ENCODE measurements at regions of chr6 and their contacts with region 1.

Region 1: DNA sequence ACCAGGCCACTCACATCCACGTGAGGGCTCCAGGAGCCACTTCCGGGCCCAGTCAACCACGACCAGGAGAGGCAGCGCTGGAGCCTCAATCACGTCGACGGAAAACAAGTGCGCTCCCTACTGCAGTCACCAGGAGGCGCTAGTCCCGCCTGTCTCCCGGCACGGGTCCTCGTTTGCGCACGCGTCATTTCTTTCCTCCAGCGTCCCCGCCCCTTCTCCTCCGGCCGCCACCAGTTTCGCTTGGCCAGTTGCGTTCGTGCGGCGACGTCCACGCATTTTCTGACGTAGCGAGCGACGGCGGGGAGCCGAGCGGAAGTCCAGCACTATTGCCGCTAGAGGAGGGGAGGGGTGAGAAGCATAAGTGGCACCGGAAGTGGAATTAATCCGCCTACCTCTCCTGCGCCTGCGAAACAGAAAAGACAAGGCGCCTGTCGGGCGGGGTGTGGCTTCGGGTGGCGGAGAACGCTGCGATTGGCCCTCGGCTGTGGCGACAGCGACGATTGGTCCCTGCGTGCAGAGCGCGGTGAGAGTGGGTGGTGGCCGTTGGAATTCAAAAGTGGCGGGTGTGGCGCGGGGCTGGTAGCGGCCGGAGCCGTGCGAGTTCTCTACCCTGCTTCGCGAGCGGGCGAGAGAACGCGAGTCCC is at the start of gene KIFC1:
- DNase-seq: peak; percentile 100
- ATAC-seq: peak; percentile 90
- H3K4me3 Mint-ChIP-seq: peak within 1 kb of the TSS; percentile 88
- H3K27ac Mint-ChIP-seq: peak within 1 kb of the TSS; percentile 96
- H3K4me1 Mint-ChIP-seq: peaks cover 37% of the 10 kb centered on the region
- H3K27me3 Mint-ChIP-seq: no peaks in the 10 kb centered on the region
- total RNA-seq, gene KIFC1: 86.0 to 89.3 TPM

Region 2: GRCh38 chr6:33248925-33249731 is 142.3 kb before region 1 on chr6:
- CTCF ChIA-PET with region 1: no interaction called
- POLR2A ChIA-PET with region 1: no interaction called
- intact Hi-C with region 1: loop called in 1 of 2 experiments (anchors 1 kb)
- DNase-seq: peak; percentile 99
- ATAC-seq: peak; percentile 93
- H3K4me3 Mint-ChIP-seq: peak overlapping the region; percentile 91
- H3K27ac Mint-ChIP-seq: peak overlapping the region; percentile 96
- H3K4me1 Mint-ChIP-seq: peaks cover 41% of the 10 kb centered on the region
- H3K27me3 Mint-ChIP-seq: peaks cover 3% of the 10 kb centered on the region

Region 3: DNA sequence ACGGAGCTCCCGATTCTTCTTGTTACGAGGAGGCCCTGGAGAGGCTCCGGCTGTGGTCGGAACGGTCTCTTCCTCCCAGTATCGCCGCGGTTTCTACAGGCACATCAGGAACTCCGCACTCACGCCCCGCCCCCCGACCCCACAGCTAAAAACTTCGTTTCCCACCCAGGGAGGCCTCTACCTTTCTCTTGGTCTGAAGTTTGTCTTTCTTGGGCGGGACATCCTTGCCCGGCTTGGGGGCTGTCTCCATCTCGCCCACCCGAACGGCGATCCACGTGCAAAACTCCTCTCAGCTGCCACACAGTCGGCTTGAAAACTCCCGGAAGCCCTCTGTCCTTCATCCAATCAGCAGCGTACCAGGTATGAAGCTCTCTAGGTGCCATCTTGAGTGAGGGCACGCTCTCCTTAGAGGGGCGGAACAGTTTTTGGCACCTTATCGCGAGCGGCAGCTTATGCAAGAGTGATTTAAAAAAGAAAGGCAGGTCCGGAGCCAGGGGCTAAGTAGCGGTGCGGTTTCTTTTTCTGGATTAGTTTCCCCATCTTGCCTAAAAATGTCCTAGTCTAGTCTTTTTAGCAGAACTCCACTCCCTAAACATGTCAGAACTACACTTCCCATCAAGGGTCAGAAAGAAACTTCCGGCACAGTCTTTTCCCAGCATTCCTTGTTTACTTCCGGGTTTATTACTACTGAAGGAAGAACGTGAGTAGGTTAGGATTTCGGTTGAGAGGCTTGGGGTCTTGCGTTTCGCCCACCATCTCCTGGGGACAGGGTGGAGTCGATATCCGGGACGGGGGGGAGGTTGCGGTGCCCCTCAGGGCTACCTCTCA is 102.3 kb before region 1 on chr6 and contains the starts of genes PFDN6 and WDR46:
- CTCF ChIA-PET with region 1: interaction called, 3 read pairs
- POLR2A ChIA-PET with region 1: no interaction called
- intact Hi-C with region 1: loop called (anchors 1 kb)
- DNase-seq: peak; percentile 87
- ATAC-seq: peak; percentile 98
- H3K4me3 Mint-ChIP-seq: peak within 1 kb of the TSS; percentile 98
- H3K27ac Mint-ChIP-seq: peak within 1 kb of the TSS; percentile 97
- H3K4me1 Mint-ChIP-seq: peaks cover 37% of the 10 kb centered on the region
- H3K27me3 Mint-ChIP-seq: no peaks in the 10 kb centered on the region
- total RNA-seq, gene PFDN6: 65.4 to 96.9 TPM
- total RNA-seq, gene WDR46: 63.5 to 69.4 TPM

Region 4: DNA sequence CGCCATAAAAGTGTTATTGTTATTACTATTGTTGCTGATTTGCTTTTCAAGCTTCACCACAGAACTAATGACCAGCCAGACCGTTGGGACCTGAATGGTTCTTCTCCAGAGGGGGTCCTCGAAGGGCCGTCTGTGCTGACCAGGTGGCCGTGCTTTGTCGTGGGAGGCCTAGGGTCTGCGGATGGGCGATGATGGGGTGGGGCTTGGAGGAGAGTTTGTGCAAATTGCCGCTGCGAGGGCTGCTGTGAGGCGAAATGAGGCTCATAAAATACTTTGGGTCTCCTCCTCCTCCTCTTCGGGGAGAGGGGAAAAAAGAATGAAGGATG is 67.8 kb before region 1 on chr6:
- CTCF ChIA-PET with region 1: interaction called, 3 read pairs
- POLR2A ChIA-PET with region 1: no interaction called
- intact Hi-C with region 1: loop called (anchors 1 kb)
- DNase-seq: no peak
- ATAC-seq: no peak
- H3K4me3 Mint-ChIP-seq: peak overlapping the region; percentile 99
- H3K27ac Mint-ChIP-seq: peak overlapping the region; percentile 99
- H3K4me1 Mint-ChIP-seq: peaks cover 46% of the 10 kb centered on the region
- H3K27me3 Mint-ChIP-seq: no peaks in the 10 kb centered on the region

Region 5: DNA sequence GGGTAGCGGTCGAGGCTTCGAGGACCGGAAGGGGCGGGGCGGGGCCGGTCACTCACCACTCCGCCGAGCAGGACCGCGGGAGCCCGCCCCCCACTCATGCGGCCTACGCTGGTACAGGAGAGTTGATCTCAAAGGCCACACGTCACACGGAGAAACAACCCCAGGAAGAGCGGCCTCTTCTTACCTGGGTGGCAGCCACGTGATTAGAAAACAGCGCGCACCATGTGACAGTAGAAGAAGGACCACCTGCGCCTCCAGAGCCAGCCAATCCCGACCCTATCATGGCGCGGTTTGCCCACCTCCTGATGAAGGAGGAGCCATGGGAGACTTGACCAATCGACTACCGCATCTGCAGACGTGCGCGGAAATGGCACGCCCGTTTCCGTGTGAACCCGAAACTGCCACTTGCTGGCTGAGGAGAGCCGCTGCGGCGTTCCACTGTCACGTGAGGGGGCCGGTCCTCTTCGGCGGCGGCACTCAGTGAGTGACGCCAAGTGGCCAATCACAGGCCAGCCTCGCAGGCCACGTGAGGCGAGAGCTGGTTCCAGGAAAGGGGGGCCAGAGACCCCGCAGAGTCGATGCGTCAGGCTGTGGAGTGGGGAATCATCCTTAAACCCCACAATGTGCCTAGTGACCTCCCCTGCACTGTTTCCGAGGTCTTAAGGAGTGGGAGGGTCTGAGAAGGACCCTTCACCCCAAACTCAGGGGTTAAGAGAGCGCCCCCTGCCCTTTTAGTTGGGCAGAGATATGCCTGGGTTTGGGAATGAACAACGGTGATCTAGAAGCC is 26.7 kb after region 1 on chr6 and contains the start of gene CUTA:
- CTCF ChIA-PET with region 1: interaction called, 3 read pairs
- POLR2A ChIA-PET with region 1: interaction called, 5 read pairs
- intact Hi-C with region 1: loop called (anchors 1 kb)
- DNase-seq: peak; percentile 100
- ATAC-seq: peak; percentile 87
- H3K4me3 Mint-ChIP-seq: peak within 1 kb of the TSS; percentile 96
- H3K27ac Mint-ChIP-seq: peak within 1 kb of the TSS; percentile 98
- H3K4me1 Mint-ChIP-seq: peaks cover 54% of the 10 kb centered on the region
- H3K27me3 Mint-ChIP-seq: no peaks in the 10 kb centered on the region
- total RNA-seq, gene CUTA: 154 to 188 TPM

Region 6: DNA sequence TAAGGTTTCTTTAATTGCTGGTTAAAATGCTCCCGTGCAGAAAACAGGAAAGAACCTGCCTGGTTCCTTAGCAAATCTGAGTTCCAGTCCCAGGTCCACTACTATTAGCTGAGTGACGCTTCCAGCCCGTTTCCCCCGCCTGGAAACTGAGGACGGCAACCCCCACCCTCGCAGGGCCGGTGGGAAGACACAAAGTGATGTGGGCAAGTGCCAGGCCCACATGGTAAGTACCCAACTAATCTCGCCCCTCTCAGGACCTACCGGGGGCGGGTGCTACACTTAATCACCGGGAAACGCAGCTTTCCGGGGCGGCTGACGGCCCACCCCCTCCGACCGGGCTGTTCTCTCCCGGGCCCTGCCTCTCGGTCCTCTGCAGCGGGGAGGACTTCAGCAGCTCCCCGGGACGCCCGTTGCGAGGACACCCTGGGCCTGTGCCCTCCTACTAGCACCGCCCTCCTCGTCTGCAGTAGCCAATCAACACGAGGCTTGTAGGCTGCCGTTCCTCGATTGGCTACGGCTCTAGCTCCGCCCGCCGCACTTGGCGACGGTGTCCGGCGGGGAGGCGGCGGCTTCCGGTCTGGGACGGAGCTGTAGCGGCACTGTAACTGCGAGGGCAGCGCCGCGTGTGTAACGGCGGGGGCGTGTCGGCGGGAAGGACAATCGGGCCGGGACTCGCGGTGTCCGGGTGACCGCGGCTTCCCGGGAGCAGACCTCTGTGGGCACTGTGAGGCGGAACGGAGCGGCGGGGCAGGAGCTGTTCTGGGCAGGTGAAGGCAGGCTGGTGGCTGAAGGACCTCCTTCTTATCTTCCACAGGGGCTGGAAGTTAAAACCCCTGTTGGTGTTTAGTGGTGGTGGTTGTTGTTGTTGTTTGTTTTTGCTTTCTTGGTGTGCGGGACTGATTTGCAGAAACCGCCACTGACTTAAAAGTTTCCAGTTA is 62.9 kb after region 1 on chr6 and contains the start of gene ZBTB9:
- CTCF ChIA-PET with region 1: interaction called, 5 read pairs
- POLR2A ChIA-PET with region 1: no interaction called
- intact Hi-C with region 1: loop called (anchors 1 kb)
- DNase-seq: peak; percentile 96
- ATAC-seq: peak; percentile 100
- H3K4me3 Mint-ChIP-seq: peak within 1 kb of the TSS; percentile 95
- H3K27ac Mint-ChIP-seq: peak within 1 kb of the TSS; percentile 82
- H3K4me1 Mint-ChIP-seq: peaks cover 27% of the 10 kb centered on the region
- H3K27me3 Mint-ChIP-seq: no peaks in the 10 kb centered on the region
- total RNA-seq, gene ZBTB9: 9.3 to 9.5 TPM

Region 7: DNA sequence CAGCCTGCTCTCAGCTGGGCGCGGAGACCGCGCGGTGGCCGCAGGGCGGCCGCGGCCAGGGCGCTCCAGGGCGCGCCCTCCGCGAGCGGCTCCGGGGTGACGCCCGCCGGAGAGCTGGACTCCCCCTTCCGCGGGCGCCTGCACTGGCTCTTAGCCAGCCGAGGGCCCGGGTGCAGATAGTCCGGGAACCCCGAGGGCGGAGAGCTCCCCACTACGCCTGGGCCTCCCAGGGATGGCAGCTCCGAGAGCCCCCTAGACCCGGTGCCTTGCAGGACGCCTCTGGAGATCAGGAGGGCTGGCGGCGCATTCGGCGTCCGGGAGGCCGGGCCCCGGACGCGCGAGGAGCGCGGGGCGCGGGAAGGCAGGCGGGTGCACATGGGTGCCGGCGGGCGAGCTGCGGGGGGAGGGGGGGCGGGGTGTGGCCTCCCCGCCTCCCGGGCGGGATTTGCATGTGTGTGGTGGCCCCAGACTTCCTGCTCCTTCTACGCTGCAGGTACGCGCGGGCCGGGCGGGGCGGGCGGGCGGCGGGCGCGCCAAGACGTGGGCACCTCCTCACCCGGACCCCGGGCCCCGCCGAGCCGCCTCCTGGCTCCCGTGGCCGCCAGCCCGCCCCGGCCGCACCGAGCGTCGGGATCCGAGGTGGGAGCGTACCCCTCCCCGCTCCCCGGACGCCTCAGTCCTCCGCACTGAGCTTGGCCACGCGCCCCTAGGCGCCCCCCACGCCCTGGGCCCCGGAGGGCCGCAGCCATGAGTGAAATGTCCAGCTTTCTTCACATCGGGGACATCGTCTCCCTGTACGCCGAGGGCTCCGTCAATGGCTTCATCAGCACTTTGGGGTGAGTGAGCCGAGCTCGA is 229.7 kb after region 1 on chr6 and contains the start of gene ITPR3:
- CTCF ChIA-PET with region 1: no interaction called
- POLR2A ChIA-PET with region 1: no interaction called
- intact Hi-C with region 1: loop called in 1 of 2 experiments (anchors 5 kb)
- DNase-seq: peak; percentile 86
- ATAC-seq: peak; percentile 85
- H3K4me3 Mint-ChIP-seq: peak within 1 kb of the TSS; percentile 94
- H3K27ac Mint-ChIP-seq: peak within 1 kb of the TSS; percentile 91
- H3K4me1 Mint-ChIP-seq: peaks cover 46% of the 10 kb centered on the region
- H3K27me3 Mint-ChIP-seq: no peaks in the 10 kb centered on the region
- total RNA-seq, gene ITPR3: 42.6 to 42.9 TPM